Posterior vena cava (tissue), 2 donors: ENCODE measurements at regions of chr16 and their contacts with region 1.

Region 1: GRCh38 chr16:14529010-14529669 is 100.9 kb downstream of the PARN start:
- DNase-seq: peak; percentile 86

Region 2: DNA sequence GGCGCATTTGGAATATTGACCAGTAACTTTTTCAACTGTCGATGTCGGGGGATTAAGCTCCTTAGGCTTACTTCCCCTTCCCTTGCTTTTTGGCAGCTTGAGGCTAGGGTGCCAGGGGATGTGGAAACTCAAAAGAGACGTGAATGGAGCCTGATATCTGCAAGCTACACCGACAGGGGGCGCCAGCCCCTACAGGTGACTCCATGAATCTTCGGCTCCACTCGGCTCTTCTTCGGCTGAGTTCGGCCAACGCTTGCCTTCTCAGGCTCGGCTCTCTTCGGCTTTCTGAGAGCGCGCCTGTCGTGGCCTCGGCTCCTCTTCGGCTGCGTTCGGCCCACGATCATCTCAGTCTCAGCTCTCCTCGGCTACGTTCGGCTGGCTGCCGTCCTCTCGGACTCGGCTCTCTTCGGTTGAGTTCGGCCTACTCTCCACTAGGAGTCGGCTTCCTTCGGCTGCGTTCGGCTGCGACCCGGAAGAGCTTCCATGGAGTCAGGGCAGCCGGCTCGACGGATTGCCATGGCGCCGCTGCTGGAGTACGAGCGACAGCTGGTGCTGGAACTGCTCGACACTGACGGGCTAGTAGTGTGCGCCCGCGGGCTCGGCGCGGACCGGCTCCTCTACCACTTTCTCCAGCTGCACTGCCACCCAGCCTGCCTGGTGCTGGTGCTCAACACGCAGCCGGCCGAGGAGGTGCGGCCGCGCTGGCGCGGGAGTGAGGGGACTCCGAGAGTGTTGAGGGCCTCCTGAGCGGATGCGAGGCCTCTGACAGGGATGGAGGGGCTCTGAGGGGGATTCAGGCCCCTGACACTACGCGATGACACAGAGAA is 609.2 kb before region 1 on chr16 and contains the start of gene ERCC4:
- intact Hi-C with region 1: loop called in 1 of 2 experiments (anchors 10 kb)
- DNase-seq: peak; percentile 100
- total RNA-seq, gene ERCC4: 11.1 to 16.5 TPM

Region 3: DNA sequence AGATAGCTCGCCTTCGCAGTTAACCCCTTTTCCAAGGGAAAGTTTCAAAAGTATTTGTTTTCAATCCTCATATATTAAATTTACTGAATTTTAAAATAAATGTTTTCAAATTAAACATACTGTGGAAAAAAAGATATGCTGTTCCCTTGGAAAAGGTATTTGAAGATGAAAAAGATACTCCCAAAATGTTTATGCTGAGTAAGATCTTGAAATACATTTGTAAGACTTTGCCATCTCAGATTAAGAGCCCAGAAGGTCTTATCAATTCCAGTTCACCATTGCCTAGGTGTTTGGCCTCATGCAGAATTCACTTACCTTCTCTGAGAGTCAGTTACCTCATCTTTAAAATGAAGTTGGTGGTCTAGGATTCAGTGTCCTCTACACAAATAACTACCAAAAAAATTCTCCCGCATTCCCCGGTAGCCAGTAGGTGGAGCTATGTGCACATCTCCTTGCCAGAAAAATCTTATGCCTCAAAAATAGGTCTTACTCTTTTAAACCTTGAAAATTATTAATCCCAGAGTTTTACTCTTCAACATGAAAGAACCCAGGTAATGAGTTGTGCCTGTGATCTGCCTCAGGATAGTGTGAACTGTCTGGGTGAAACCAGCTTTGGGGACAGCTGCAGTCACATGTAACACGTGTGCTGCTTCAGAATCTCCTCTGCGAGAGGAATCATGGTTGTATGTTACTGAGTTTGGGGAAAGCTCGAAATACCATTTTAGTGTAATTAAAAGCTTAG is 279.7 kb before region 1 on chr16:
- intact Hi-C with region 1: loop called in 1 of 2 experiments (anchors 5 kb)
- DNase-seq: no peak

Region 4: DNA sequence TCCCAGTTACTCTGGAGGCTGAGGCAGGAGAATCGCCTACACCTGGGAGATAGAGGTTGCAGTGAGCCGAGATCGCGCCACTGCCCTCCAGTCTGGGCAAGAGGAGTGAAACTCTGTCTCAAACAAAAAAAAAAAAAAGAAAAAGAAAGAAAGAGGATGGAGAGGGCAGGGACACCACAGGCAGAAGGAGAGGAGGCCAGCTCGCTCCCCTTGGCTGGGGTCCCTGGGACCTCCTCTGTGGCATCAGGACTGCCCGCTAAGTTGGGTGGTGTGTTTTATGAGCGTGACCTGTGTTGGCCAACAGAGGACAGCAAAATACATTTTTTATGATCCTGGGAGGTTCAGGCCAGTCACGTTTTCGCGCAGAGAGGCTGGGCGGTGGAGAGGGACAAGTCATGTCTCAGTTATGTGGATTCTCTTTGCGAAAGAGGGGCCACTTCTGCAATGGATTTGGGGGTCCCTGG is 228.4 kb before region 1 on chr16:
- intact Hi-C with region 1: loop called (anchors 5 to 10 kb)
- DNase-seq: peak; percentile 88